Activated CD4-positive, alpha-beta T cell treated with anti-CD3 and anti-CD28 coated beads, Interleukin-2, amount 10 ng/mL, durations not matched to agents 24 days and 14 days (primary cell): ENCODE measurements at regions of chr9 and their contacts with region 1.

Region 1: DNA sequence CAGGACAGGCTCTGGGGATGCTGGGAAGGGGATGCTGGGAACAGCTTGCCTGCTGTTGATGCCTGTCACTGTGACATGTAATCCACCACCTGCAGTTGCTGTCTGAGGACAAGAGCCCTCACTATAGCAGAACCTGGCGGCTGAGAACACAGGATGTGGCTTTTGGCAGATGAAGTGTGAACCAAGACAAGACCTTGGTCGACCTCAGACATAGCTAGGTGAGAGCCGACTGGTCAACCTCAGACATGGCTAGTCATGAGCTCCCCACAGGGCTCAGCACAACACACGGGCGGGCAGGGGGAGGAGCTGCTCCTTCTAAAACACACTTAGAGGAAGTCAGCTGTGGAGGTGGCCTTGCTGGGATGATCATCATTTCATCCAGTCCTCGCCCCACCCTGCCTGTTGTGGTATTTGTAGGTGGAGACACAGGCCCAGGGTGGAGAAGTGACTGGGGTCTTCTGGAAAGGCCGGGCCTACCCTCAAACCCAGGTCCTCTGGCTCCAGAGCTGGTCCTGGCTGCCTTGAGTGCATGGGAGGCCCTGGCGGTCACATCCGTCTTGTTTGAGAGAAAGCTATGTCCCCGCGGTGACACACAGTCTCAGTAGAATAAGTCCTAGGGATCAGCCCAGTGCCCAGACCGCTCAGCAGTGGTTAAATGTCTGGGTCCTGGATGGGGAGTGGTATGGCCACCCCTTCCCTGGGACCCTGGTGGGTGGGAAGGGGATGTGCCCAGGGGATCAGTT is 6.1 kb downstream of the SUSD3 start:
- DNase-seq: peak; percentile 97
- H3K4me3 Mint-ChIP-seq: peak overlapping the region; percentile 86
- H3K27ac Mint-ChIP-seq: peak overlapping the region; percentile 96
- H3K4me1 Mint-ChIP-seq: peaks cover 76% of the 10 kb centered on the region
- H3K27me3 Mint-ChIP-seq: no peaks in the 10 kb centered on the region

Region 2: GRCh38 chr9:93028448-93029006 is 36.0 kb before region 1 on chr9:
- intact Hi-C with region 1: loop called (anchors 2 kb)
- DNase-seq: peak; percentile 92
- H3K4me3 Mint-ChIP-seq: peak overlapping the region; percentile 82
- H3K27ac Mint-ChIP-seq: peak overlapping the region; percentile 94
- H3K4me1 Mint-ChIP-seq: peaks cover 60% of the 10 kb centered on the region
- H3K27me3 Mint-ChIP-seq: no peaks in the 10 kb centered on the region

Region 3: GRCh38 chr9:93082841-93083411 is 18.4 kb after region 1 on chr9:
- intact Hi-C with region 1: loop called (anchors 1 kb)
- DNase-seq: peak; percentile 69
- H3K4me3 Mint-ChIP-seq: peak overlapping the region; percentile 26
- H3K27ac Mint-ChIP-seq: peak overlapping the region; percentile 92
- H3K4me1 Mint-ChIP-seq: peaks cover 30% of the 10 kb centered on the region
- H3K27me3 Mint-ChIP-seq: no peaks in the 10 kb centered on the region

Region 4: DNA sequence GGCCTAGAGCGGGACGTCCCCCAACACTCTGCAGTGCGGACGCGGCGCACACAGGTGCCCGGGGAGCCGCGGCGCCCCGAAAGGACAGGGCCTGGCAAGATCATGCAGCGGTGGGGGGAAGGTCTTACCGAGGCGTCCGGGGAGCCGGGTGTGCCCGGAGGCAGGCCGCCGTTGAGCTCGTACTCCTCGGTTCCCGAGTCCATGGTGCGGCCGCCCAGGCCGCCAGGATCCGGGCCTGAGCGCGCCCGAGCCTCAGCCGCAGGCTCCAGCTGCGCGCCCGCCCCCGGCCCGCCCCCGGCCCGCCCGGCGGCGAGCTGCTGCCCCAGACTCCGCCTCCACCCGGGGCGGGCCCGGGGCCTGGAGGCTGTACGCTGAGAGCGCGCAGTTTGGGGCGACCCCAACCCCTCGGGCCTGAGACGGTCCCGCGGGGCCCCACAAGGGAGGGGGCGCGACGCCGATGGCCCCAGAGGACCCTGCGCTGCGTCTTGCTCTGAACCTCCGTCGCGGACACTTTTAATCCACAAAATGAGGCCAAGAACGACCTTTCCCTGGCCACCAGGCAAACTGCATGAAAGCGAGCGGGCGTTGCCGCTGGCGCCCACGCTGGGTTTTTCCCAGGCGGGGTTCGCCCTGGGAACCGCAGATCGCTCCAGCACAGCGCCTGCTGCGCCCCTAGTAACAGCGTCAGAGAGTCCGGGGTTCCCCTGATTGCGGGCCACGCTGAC is 69.6 kb after region 1 on chr9 and contains the start of gene NINJ1:
- intact Hi-C with region 1: loop called (anchors 2 kb)
- DNase-seq: peak; percentile 97
- H3K4me3 Mint-ChIP-seq: peak within 1 kb of the TSS; percentile 93
- H3K27ac Mint-ChIP-seq: peak within 1 kb of the TSS; percentile 97
- H3K4me1 Mint-ChIP-seq: peaks cover 60% of the 10 kb centered on the region
- H3K27me3 Mint-ChIP-seq: no peaks in the 10 kb centered on the region
- total RNA-seq, gene NINJ1: 103 and 110 TPM in 2 replicates

Region 5: DNA sequence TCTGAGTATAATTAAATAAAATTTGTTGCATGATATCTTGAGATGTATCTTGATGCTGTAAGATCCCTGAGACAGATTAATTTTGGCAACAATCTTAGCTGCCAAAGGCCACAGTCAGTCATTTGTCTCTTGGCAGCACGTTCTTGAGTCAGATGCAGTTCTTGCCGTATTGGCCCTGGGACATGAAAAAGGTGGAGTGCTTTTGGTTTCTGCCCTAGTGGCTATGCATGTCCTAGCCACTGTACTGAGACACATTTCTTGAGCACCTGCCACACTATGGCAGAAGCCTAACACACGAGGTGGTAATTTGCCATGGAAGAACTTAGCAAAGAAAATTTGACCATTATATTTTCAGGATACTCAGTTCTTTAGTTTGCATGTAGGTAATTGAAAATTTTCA is 466.8 kb after region 1 on chr9:
- intact Hi-C with region 1: no loop called
- DNase-seq: no peak
- H3K4me3 Mint-ChIP-seq: no peak overlapping the region
- H3K27ac Mint-ChIP-seq: no peak overlapping the region
- H3K4me1 Mint-ChIP-seq: peaks cover 13% of the 10 kb centered on the region
- H3K27me3 Mint-ChIP-seq: no peaks in the 10 kb centered on the region

Region 6: DNA sequence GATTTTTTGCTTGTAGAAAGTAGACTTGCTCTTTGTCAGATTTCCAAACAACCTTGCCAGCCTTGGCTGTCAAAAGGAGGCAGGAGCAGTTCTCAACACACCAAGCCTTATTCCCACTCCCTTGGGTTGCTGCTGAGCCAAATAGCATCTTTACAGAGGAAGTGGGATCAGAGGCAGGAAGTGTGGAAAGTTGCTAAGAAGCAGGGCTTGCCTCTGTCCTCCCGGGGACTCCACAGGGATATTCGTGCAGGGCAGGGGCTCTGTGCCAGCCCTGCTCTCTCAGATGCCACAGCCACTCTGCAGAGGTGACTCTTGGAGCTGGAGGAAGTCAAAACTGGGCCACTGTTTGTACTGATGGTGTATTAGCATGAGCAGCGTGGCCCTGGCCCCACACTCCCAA is 1044.0 kb after region 1 on chr9:
- intact Hi-C with region 1: no loop called
- DNase-seq: no peak
- H3K4me3 Mint-ChIP-seq: no peak overlapping the region
- H3K27ac Mint-ChIP-seq: no peak overlapping the region
- H3K4me1 Mint-ChIP-seq: peaks cover 5% of the 10 kb centered on the region
- H3K27me3 Mint-ChIP-seq: no peaks in the 10 kb centered on the region